ENCODE measurements at regions of chr5 and their contacts with region 1.

Region 1: GRCh38 chr5:132426525-132427138 is 57.1 kb downstream of the SLC22A5 start:
- DNase-seq: peak; percentile 93

Region 2: DNA sequence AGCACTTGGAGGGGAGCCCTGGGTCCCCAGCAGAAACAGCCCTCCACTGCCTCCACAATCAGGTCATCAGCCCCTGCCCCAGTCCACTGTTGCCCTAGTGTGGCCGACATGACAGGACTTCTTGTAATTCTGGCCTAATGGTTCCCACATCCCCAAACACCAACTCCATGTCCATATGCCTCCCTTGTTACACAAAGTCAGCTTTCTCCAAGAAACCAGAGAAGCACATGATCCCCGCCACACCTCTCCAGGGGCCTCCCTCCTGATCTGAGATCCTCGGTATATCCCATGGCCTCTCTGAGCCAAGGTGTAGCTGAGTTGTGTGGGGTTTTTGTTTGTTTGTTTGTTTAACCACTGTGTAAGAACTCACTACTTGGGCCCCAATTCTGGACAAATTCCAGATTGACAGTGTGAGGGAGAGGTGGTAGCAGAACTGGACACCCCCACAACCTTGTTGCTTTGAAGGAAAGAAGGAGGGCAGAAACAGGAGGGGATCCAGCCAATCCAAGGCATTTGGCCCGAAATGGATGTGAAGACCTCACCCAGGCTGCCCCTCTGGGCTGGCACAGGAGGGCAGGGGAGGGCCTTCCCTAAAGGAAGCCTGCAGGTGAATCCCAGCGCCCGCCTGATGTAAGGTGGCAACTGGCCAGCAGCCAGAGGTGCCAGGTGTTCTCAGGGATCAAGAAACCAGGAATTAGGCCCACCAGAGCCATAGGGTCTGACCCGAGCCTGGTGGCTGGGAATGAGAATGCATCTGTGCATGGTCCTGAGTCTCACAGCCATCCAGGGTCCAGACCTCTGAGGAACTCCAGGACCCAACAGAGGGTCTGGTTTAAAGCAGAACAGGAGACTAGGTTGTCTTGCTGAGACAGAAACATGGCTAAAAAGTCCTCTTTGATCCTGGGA is 50.5 kb after region 1 on chr5:
- intact Hi-C with region 1: loop called (anchors 5 kb)
- DNase-seq: no peak

Region 3: DNA sequence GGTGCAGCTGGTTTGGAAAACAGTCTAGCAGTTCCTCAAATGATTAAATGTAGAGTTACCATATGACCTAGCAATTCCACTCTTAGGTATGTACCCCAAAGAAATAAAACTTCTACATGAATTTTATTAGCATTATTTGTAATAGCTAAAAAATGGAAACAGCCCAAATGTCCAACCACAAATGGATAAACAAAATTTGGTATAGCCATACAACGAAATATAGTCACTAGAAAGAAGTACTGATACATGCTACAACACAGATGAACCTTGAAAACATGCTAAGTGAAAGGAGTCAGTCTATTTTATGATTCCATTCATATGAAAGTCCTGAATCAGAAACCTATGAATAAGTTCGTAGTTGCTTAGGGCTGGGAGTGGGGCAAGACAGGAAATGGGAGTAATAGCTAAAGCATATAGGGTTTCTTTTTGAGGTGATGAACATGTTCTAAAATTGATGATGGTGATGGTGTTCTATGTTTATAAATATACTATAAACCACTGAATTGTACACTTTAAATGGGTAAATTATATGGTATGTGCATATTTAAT is 433.3 kb after region 1 on chr5:
- intact Hi-C with region 1: no loop called
- DNase-seq: no peak